SK-N-SH (cell line): ENCODE measurements at regions of chr11 and their contacts with region 1.

Region 1: DNA sequence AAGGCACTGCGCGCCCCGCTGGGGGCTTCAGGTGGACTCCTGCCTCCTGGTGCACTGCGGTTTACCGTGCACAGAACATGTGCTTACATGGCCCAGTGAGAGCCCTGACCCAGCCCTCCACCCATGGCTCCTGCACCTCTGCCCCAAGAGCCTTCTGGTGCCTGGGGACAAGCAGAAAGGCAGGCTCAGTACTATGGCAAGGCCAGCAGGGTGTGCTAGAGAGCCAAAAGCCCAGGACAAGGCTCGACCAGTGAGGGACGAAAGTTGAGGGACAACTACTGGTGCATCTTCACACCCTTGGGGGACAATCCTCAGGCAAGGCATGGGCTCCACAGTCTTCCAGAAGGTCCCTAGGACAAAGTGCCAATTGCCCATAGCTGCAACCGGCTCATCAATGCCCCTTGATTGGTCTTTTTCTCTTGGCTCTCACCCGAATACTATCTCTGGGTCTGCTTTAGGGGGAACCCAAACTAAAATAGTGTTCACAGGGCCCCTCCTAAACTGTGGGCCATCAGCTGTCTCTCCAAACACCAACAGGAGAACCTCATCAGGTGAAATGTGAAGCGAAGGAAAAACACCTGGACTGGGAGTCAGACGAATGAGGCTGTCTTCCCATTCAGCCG is 13.5 kb downstream of the PGA5 start:
- DNase-seq: peak; percentile 76
- H3K4me3 ChIP-seq: no peak overlapping the region; a peak in 1 of 4 replicates
- H3K27ac ChIP-seq: no peak overlapping the region
- H3K4me1 ChIP-seq: peaks cover 0 to 22% of the 10 kb centered on the region in 2 experiments; a peak in 1 of 4 replicates
- H3K27me3 ChIP-seq: no peaks in the 10 kb centered on the region
- CTCF ChIP-seq: peak; percentile 77
- EP300 ChIP-seq: no peak
- RAD21 ChIP-seq: peak; percentile 75

Region 2: GRCh38 chr11:61266602-61267001 is 12.1 kb after region 1 on chr11:
- CTCF ChIA-PET with region 1: interaction called, 12 read pairs
- POLR2A ChIA-PET with region 1: no interaction called
- DNase-seq: no peak
- H3K4me3 ChIP-seq: no peak overlapping the region
- H3K27ac ChIP-seq: no peak overlapping the region
- H3K4me1 ChIP-seq: no peaks in the 10 kb centered on the region
- H3K27me3 ChIP-seq: no peaks in the 10 kb centered on the region
- CTCF ChIP-seq: no peak
- EP300 ChIP-seq: no peak
- RAD21 ChIP-seq: no peak

Region 3: DNA sequence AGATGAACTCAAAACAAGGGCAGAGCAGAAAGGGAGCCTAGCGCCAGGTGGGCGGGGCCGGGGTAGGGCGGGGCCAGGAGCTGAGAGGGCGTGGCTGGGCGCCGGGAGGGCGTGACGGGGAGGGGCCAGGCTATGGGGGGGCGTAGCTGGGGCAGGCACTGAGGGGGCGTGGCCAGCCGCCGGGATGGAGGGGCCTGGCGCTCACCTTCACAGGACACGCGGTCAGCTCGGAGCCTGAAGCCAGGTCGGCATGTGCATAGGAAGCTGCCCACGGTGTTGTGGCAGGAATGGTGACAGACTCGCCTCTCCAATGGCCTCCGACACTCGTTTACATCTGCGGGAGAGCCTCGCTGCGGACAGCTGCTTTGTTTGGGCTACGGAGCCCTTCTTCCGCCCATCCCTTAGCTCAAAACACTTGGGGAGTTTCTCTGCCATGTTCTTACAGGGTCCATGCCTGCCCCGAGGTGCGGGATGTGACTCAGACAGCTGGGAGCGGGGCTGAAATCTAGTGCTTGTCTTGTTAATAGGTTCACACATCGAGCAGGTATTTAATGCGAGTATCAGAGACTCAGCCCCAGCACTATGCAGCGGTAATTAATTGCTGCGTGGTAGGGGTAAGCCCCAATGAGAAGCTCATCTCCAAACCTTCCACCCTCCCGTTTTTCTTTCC is 27.2 kb after region 1 on chr11:
- CTCF ChIA-PET with region 1: interaction called, 11 read pairs
- POLR2A ChIA-PET with region 1: no interaction called
- DNase-seq: peak; percentile 93
- H3K4me3 ChIP-seq: no peak overlapping the region
- H3K27ac ChIP-seq: no peak overlapping the region
- H3K4me1 ChIP-seq: no peaks in the 10 kb centered on the region
- H3K27me3 ChIP-seq: no peaks in the 10 kb centered on the region
- CTCF ChIP-seq: no peak
- EP300 ChIP-seq: no peak
- RAD21 ChIP-seq: no peak

Region 4: DNA sequence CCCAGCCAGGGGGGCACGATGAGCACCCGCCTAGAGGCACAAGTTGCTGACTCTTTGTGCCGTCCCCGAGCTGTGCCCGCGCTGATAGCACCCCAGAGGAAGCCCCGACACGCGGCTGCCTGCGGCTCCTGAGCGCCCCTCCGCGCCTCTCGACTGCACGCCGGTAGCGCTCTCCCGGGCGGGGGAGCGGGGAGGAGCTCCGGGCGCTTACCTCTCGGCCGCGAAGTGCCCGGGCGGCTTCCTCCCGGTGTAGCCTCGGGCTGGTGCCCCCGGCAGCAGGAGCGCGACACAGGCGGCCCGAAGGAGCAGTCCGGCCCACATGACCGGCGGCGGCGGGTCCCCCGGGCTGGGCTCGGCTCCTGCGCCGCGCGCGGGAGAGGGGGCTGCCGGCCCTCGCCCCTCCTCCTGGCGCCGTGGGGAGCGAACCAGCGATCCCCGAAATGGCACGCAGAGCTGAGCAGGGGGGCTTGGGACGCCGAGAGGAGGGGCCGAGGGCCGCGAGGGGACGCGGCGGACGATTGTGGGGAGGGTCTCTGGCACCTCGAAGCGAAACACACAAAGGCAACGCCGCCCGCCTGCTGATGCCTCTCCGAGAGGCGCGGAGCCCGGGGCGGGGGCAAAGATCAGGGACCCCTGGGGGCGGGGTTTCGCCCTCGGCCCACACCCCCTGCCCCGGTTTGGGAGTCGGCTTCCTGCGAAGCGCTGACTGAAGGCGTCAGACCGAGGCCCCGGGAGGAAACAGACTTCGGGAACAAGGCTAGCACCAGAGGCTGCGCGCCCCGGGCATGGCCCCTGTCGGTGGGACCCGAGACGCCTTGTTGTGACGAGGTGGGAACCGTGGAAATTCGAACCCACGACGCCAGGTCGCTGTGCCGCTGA is 40.4 kb after region 1 on chr11 and contains the start of gene VWCE:
- CTCF ChIA-PET with region 1: interaction called, 20 read pairs
- POLR2A ChIA-PET with region 1: no interaction called
- DNase-seq: peak; percentile 89
- H3K4me3 ChIP-seq: peak within 1 kb of the TSS; percentile 55 to 69
- H3K27ac ChIP-seq: peak within 1 kb of the TSS in 1 of 2 experiments; percentile 58; a peak in 2 of 4 replicates
- H3K4me1 ChIP-seq: peaks cover 16 to 23% of the 10 kb centered on the region in 2 experiments; a peak in 2 of 4 replicates
- H3K27me3 ChIP-seq: no peaks in the 10 kb centered on the region
- CTCF ChIP-seq: peak; percentile 36
- EP300 ChIP-seq: no peak
- RAD21 ChIP-seq: peak; percentile 23; the same call in 1 of the 2 replicates
- polyA plus RNA-seq, gene VWCE: 3.4 and 5.0 TPM in 2 replicates